Lower leg skin (tissue), 4 donors: ENCODE measurements at regions of chr6 and their contacts with region 1.

Region 1: GRCh38 chr6:130105996-130106704 is 87.8 kb downstream of the L3MBTL3 start:
- DNase-seq: no peak
- H3K4me3 ChIP-seq: no peak overlapping the region
- CTCF ChIP-seq: no peak
- POLR2A ChIP-seq: no peak

Region 2: DNA sequence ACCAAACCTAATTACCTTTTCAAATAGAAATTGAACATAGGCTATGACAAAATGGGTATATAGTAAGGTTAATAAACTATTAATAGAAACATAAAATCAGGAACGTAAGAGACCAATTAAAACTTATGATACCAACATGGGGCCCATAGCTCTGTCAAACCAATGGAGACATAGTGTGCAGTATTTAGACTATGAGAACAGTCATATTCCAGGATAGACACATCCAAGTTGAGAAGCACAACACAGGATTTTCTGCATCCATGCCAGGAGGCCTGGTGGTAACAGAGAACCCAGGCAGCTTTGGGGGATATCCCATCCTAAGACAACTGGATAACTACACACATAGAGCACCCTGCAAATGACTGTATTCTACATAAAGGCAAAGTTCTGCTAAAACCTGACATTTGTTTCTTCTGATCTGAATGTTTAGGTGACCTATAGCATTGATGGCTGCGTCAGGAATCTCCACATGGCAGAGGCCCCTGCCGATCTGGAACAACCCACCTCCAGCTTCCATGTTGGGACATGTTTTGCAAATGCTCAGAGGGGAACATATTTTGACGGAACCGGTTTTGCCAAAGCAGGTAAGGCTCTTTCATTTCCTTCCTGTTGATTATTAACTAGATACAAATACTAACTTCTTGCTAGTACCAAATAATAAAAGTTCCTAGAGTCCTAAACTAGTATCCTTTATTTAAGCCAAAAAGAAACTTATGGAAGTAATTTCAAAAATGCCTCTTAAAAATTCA is 598.9 kb before region 1 on chr6:
- intact Hi-C with region 1: loop called (anchors 5 kb)
- DNase-seq: no peak
- H3K4me3 ChIP-seq: no peak overlapping the region
- CTCF ChIP-seq: no peak
- POLR2A ChIP-seq: no peak